Heart right ventricle (tissue), 16 donors: ENCODE measurements at regions of chr6 and their contacts with region 1.

Region 1: GRCh38 chr6:144149891-144150709 is at the start of gene STX11:
- DNase-seq: peak; percentile 73 to 80
- ATAC-seq: peak; percentile 93 to 98 (median 94)
- H3K4me3 ChIP-seq: peak within 1 kb of the TSS; percentile 59 to 85 (median 78)
- H3K27ac ChIP-seq: peak within 1 kb of the TSS in 9 of 10 donors; percentile 46 to 94 (median 79)
- H3K4me1 ChIP-seq: peaks cover 0 to 47% (median 13%) of the 10 kb centered on the region in 9 donors
- H3K27me3 ChIP-seq: no peaks in the 10 kb centered on the region
- CTCF ChIP-seq: no peak
- total RNA-seq, gene STX11: 6.9 to 15.9 (median 8.9) TPM

Region 2: GRCh38 chr6:143872201-143872600 is 277.9 kb before region 1 on chr6:
- intact Hi-C with region 1: no loop called
- DNase-seq: no peak
- ATAC-seq: no peak
- H3K4me3 ChIP-seq: no peak overlapping the region
- H3K27ac ChIP-seq: no peak overlapping the region
- H3K4me1 ChIP-seq: peaks cover 0 to 3% (median 0%) of the 10 kb centered on the region in 9 donors
- H3K27me3 ChIP-seq: no peaks in the 10 kb centered on the region
- CTCF ChIP-seq: no peak

Region 3: DNA sequence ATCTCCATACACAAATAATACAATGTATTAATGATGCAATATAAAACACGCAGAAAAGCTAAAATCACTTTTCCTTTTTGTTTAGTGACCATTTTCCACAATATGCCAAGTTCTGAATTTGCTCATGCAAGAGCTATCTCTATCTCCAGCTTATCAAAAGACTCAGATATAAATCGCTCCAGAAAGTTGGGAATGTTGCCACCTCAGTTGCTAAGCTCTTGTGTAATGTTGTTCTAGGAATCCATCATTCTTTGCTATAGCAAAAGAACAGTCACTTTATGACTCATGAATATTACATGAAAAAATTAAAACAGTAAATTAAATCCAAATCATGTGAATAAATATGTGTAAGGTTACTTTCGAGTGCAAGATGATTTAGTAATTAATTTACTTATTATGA is 150.7 kb before region 1 on chr6:
- intact Hi-C with region 1: no loop called
- DNase-seq: no peak
- ATAC-seq: no peak
- H3K4me3 ChIP-seq: no peak overlapping the region
- H3K27ac ChIP-seq: no peak overlapping the region
- H3K4me1 ChIP-seq: no peaks in the 10 kb centered on the region
- H3K27me3 ChIP-seq: no peaks in the 10 kb centered on the region
- CTCF ChIP-seq: no peak

Region 4: GRCh38 chr6:144104898-144105487 is 45.1 kb before region 1 on chr6:
- intact Hi-C with region 1: loop called in 4 of 10 experiments (anchors 5 kb)
- DNase-seq: peak in 1 of 2 donors; percentile 74
- ATAC-seq: peak; percentile 57 to 91 (median 87)
- H3K4me3 ChIP-seq: no peak overlapping the region
- H3K27ac ChIP-seq: no peak overlapping the region
- H3K4me1 ChIP-seq: peaks cover 0 to 6% (median 0%) of the 10 kb centered on the region in 9 donors
- H3K27me3 ChIP-seq: no peaks in the 10 kb centered on the region
- CTCF ChIP-seq: peak; percentile 48 to 87 (median 72)

Region 5: DNA sequence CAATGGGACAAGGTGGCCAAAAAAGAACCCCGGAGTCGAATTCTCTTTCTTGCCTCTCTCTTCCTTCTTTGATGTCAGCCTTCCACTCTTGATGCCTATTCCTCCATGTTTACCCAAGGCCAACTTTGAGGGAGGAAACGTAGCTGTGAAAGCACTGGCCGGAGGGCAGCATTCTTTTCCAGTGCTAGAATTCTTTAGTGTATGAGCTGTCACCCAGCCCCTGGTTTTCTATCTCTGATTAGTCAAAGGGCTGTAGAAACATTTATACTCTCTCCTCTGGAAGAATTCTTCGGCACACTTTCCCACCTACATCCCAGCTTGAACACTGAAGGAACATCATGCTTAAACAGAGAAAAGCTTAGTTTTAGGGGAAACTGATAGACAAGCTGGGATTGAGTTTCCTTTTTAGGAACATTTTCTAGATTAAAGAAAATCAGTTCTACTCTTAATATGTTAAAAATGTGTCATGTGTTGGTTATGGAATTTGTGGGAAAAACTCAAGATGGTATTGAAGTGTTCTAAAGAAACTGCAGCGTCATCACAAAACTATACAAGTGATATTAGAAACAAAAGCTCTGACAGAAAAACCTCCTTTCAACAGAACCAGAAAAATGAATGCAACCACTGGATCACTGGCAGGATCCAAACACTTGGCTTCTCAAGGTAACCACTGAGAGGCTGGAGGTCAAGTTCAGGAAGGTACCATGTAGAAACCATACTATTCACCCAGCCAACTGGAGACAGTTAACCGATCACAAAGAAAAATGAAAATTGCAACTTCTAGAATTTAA is 114.4 kb after region 1 on chr6:
- intact Hi-C with region 1: no loop called
- DNase-seq: no peak
- ATAC-seq: peak in 2 of 8 donors; percentile 42 to 55
- H3K4me3 ChIP-seq: no peak overlapping the region
- H3K27ac ChIP-seq: peak overlapping the region in 8 of 10 donors; percentile 55 to 91 (median 76)
- H3K4me1 ChIP-seq: peaks cover 7 to 43% (median 26%) of the 10 kb centered on the region in 9 donors
- H3K27me3 ChIP-seq: no peaks in the 10 kb centered on the region
- CTCF ChIP-seq: no peak